PC-9 (cell line): ENCODE measurements at regions of chr6 and their contacts with region 1.

Region 1: GRCh38 chr6:41367700-41368099 is 32.3 kb downstream of the NCR2 start:
- DNase-seq: peak; percentile 37 to 58
- H3K4me3 ChIP-seq: no peak overlapping the region
- H3K27ac ChIP-seq: no peak overlapping the region
- H3K4me1 ChIP-seq: 0 out of 2 replicates have a peak, but pooled peaks cover 5% of the 10 kb centered on the region
- H3K27me3 ChIP-seq: peaks cover 24% of the 10 kb centered on the region
- CTCF ChIP-seq: peak; percentile 76

Region 2: GRCh38 chr6:41306187-41306854 is 61.4 kb before region 1 on chr6:
- CTCF ChIA-PET with region 1: no interaction called
- POLR2A ChIA-PET with region 1: no interaction called
- intact Hi-C with region 1: loop called (anchors 2 kb)
- DNase-seq: peak; percentile 52 to 65
- H3K4me3 ChIP-seq: no peak overlapping the region
- H3K27ac ChIP-seq: no peak overlapping the region
- H3K4me1 ChIP-seq: no peaks in the 10 kb centered on the region
- H3K27me3 ChIP-seq: peaks cover 8% of the 10 kb centered on the region; the same call in 1 of the 2 replicates
- CTCF ChIP-seq: peak; percentile 78

Region 3: GRCh38 chr6:41591859-41592502 is 224.3 kb after region 1 on chr6:
- CTCF ChIA-PET with region 1: no interaction called
- POLR2A ChIA-PET with region 1: no interaction called
- intact Hi-C with region 1: loop called (anchors 1 kb)
- DNase-seq: peak; percentile 53 to 71
- H3K4me3 ChIP-seq: no peak overlapping the region
- H3K27ac ChIP-seq: no peak overlapping the region
- H3K4me1 ChIP-seq: no peaks in the 10 kb centered on the region
- H3K27me3 ChIP-seq: no peaks in the 10 kb centered on the region
- CTCF ChIP-seq: peak; percentile 95

Region 4: DNA sequence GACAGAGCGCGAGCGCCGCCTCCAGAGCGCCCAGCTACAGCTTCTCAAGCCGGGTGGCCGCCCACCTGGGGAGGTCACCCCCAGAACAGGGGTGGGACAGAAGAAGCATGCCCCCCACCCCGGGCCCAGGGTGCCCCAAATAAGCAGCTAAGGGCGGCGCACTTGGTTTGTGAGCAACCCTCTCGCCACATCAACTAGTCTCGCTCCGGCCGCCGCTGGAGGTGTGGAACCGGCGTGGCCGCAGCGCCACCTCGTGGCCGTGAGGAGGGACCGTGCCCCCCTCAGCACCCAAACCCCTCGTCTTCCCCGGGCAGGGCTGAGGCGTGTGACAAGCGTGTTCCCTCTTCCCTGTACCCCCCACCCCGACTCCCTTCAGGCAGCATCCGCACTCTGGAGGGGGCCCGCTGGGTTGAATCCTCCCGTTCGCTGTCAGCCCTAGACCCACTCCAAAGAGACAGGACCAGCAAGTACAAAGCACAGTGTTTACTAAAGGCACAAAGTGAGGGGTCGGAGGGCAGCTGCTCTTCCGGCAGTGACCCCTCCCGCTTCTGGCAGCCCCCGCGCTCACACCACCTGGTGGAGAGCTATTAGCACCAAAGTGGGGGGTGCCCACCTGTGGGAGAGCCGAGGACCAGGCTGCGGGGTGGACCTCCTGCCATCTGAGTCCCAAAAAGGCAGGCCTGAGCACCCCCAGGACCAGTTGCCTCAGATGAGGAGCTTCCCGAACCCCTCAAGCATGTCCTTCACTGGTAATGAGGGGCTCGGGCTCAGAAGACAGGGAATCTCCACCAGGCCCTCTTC is 316.0 kb after region 1 on chr6:
- CTCF ChIA-PET with region 1: interaction called, 5 read pairs
- POLR2A ChIA-PET with region 1: no interaction called
- intact Hi-C with region 1: loop called (anchors 1 kb)
- DNase-seq: peak in 1 of 2 experiments; percentile 72
- H3K4me3 ChIP-seq: peak overlapping the region; percentile 31; the same call in 1 of the 2 replicates
- H3K27ac ChIP-seq: no peak overlapping the region
- H3K4me1 ChIP-seq: peaks cover 14% of the 10 kb centered on the region; the same call in 1 of the 2 replicates
- H3K27me3 ChIP-seq: no peaks in the 10 kb centered on the region
- CTCF ChIP-seq: peak; percentile 86